Activated CD4-positive, alpha-beta T cell treated with anti-CD3 and anti-CD28 coated beads for 36 hours (primary cell): ENCODE measurements at regions of chr11 and their contacts with region 1.

Region 1: GRCh38 chr11:126355324-126355925 is at the start of gene ST3GAL4:
- DNase-seq: peak; percentile 86
- ATAC-seq: peak; percentile 77
- H3K4me3 Mint-ChIP-seq: peak within 1 kb of the TSS; percentile 93
- H3K27ac Mint-ChIP-seq: peak within 1 kb of the TSS; percentile 88
- H3K4me1 Mint-ChIP-seq: peaks cover 29% of the 10 kb centered on the region
- H3K27me3 Mint-ChIP-seq: no peaks in the 10 kb centered on the region
- total RNA-seq, gene ST3GAL4: 7.5 to 9.1 TPM

Region 2: GRCh38 chr11:126282736-126283591 is 72.5 kb before region 1 on chr11 and contains the start of gene TIRAP:
- CTCF ChIA-PET with region 1: no interaction called
- POLR2A ChIA-PET with region 1: interaction called, 3 read pairs
- intact Hi-C with region 1: loop called in 1 of 2 experiments (anchors 1 kb)
- DNase-seq: peak; percentile 76
- ATAC-seq: peak; percentile 53
- H3K4me3 Mint-ChIP-seq: peak within 1 kb of the TSS; percentile 81
- H3K27ac Mint-ChIP-seq: peak within 1 kb of the TSS; percentile 94
- H3K4me1 Mint-ChIP-seq: peaks cover 46% of the 10 kb centered on the region
- H3K27me3 Mint-ChIP-seq: no peaks in the 10 kb centered on the region
- total RNA-seq, gene TIRAP: 5.3 to 7.5 TPM

Region 3: DNA sequence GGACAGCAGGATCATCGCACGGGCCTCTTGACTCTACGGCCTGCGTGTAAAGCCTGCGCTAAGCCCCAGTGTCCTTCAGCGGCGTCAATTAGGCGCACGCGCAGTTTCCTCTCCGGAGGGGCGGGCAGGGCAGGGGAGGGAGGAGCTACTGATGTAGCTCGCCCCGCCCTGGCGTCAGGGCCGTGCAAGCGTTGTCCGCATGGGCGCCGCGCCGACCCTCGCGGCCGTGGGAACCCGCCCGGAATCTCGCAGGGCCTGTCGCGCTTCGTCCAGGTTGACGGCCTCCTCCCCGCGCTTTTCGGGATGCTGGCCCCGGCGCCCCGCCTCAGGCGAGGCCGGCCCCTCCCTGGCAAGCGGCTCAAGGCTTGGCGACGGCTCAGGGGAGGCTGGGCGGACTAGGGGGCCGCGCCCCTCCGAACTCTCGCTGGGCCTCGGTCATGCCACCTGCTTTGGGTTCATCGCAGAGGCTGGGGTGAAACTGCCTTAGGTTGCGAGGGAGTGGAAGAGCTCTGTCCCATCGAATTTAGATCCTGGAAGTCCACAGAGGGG is 61.2 kb after region 1 on chr11:
- CTCF ChIA-PET with region 1: no interaction called
- POLR2A ChIA-PET with region 1: no interaction called
- intact Hi-C with region 1: loop called in 1 of 2 experiments (anchors 2 kb)
- DNase-seq: peak; percentile 88
- ATAC-seq: peak; percentile 100
- H3K4me3 Mint-ChIP-seq: peak overlapping the region; percentile 36
- H3K27ac Mint-ChIP-seq: peak overlapping the region; percentile 19
- H3K4me1 Mint-ChIP-seq: peaks cover 7% of the 10 kb centered on the region
- H3K27me3 Mint-ChIP-seq: no peaks in the 10 kb centered on the region